Mammary epithelial cell (primary cell): ENCODE measurements at regions of chr10 and their contacts with region 1.

Region 1: DNA sequence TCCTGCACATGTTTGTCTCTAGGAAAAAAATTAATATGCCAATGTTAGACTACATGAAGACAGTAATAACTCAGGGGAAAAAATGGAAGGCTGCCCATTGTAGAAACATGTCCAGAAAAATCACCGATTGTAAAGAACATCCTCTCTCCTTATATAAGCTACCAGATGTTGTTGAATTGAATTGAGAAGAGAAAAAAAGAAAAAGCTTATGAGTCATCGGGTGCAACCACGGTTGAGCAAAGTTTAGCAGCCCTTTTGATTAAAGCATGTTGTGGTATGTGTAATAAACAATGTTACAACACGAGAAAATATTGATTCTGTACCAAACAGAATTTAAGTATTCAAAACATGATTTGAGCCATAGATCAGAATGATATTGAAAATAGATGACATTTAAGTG is 102.3 kb upstream of the ARHGAP21 start:
- DNase-seq: peak; percentile 75
- H3K4me3 ChIP-seq: peak overlapping the region in 2 of 3 experiments; percentile 6 to 12
- H3K27ac ChIP-seq: peak overlapping the region; percentile 46
- H3K4me1 ChIP-seq: peaks cover 36% of the 10 kb centered on the region
- H3K27me3 ChIP-seq: no peaks in the 10 kb centered on the region
- CTCF ChIP-seq: no peak

Region 2: GRCh38 chr10:24858288-24859270 is 32.6 kb after region 1 on chr10:
- CTCF ChIA-PET with region 1: no interaction called
- dilution Hi-C with region 1: loop called (anchors 5 kb)
- in situ Hi-C with region 1: no loop called
- intact Hi-C with region 1: no loop called
- DNase-seq: peak; percentile 66
- H3K4me3 ChIP-seq: no peak overlapping the region
- H3K27ac ChIP-seq: no peak overlapping the region
- H3K4me1 ChIP-seq: peaks cover 18% of the 10 kb centered on the region
- H3K27me3 ChIP-seq: no peaks in the 10 kb centered on the region
- CTCF ChIP-seq: no peak

Region 3: DNA sequence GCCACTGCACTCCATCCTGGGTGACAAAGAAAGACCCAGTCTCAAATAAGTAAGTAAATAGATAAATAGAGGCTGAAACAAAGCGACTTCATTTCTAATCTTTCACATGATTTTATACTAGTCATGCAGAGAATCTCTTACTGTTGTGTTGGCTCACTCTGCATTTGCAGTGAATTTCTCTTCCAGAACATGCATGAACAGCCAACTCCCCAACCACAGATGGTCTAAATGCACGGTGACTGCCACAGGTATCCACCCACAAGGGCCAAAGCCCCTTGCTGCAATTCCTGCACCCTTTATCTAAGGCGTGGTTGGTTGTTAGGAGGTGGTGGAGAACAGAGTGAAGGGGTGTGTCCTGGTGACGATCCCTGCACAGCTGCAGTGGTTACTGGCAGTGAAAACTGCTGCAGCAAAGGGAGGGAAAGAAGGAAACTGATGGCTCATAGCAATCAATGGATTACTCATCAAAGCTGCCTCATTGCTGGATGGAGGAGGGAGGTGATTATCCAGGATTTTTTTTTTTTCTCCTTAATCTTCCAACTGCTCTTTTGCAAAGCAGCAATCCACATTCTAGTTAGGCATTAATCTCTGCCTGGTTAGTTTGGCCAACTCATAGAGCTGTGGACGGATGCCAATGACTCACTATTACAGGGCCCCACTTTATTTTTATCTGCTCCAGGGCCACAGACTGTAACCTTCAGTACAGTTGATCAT is 75.8 kb after region 1 on chr10:
- CTCF ChIA-PET with region 1: no interaction called
- dilution Hi-C with region 1: no loop called
- in situ Hi-C with region 1: loop called in 1 of 2 experiments (anchors 10 kb)
- intact Hi-C with region 1: no loop called
- DNase-seq: peak; percentile 93
- H3K4me3 ChIP-seq: no peak overlapping the region
- H3K27ac ChIP-seq: peak overlapping the region; percentile 39
- H3K4me1 ChIP-seq: peaks cover 26% of the 10 kb centered on the region
- H3K27me3 ChIP-seq: no peaks in the 10 kb centered on the region
- CTCF ChIP-seq: no peak

Region 4: DNA sequence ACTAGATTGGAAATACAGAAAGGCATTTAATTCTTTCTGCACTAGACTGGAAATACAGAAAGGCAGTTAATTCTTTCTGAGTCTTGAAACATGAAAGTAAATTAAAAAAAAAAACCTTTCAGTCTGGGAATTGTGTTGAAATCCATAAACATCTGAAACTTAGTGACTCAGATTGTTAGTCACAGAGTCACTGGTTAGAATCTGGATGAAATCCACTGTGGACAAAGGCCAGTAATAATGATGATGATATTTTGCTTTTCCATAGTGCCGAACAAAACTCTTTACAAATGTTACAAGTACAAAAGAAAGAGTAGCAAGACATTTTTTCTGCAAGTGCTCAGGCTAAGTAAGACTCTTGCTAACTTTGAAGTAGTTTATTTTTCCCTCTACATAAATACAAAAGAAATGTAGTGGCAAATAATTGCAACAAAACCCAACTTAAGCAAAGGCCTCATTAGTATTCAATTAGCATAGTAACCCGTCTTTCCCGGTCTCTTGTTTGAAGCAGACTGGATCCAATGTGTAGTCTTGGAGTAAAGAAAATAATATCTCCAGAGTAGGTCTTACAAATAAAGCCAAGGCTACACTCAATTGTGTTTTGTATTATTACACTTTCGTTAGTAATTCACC is 132.2 kb after region 1 on chr10:
- CTCF ChIA-PET with region 1: no interaction called
- dilution Hi-C with region 1: no loop called
- in situ Hi-C with region 1: loop called in 1 of 2 experiments (anchors 10 kb)
- intact Hi-C with region 1: loop called (anchors 5 kb)
- DNase-seq: peak; percentile 90
- H3K4me3 ChIP-seq: no peak overlapping the region
- H3K27ac ChIP-seq: peak overlapping the region; percentile 90
- H3K4me1 ChIP-seq: peaks cover 32% of the 10 kb centered on the region
- H3K27me3 ChIP-seq: no peaks in the 10 kb centered on the region
- CTCF ChIP-seq: no peak

Region 5: DNA sequence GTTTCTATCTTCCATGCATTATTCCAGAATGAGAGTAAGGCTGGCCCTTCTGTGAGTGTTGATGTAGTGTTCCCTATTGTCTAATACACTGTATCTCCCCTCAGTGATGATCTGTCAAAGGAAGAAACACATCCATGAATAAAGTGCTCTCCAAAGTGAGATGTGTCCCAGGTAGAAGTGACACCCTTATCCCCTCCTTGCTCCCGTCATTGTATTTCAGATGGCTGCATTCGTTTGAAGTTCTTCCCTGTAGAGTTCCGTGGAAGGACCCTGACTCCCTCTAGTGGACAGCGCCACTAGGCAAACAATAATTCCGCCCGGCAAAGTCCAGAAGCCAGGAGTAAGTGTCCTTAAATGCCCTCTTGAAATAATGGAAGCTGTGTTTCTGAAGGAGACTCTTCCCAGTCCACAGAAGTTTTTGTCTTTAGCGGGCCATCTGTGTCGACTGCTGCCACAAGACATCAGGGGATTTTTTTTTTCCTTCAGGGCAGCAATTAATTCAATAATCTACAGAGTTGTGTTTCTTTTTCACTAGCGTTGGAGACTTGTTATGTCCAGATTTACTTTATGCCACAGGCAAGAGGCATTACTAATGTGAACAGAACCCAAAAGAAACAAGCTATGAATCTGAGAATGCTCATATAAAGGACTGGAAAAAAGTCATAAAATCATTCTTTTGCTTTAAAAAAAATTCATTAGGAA is 255.0 kb after region 1 on chr10:
- CTCF ChIA-PET with region 1: no interaction called
- dilution Hi-C with region 1: no loop called
- in situ Hi-C with region 1: no loop called
- intact Hi-C with region 1: loop called (anchors 5 kb)
- DNase-seq: peak; percentile 72
- H3K4me3 ChIP-seq: no peak overlapping the region
- H3K27ac ChIP-seq: no peak overlapping the region
- H3K4me1 ChIP-seq: no peaks in the 10 kb centered on the region
- H3K27me3 ChIP-seq: no peaks in the 10 kb centered on the region
- CTCF ChIP-seq: peak; percentile 87 to 95